ENCODE measurements at regions of chr7 and their contacts with region 1.

Region 1: DNA sequence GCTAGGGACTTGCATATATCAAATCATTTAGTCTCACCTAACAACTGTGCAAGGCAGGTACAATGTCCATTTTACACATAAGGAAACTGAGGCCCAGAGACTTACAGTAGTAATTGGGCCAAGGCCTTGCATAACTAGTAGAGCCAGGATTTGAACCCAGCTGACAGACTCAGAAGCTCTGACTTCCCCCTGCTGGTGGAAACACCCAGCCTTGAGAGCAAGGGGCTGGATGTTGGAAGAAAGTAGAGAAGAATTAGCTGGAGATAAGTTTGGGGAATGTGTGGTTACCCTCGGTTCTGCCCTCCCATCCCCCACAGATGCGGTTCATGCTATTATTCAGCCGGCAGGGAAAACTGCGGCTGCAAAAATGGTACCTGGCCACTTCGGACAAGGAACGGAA is 2.0 kb downstream of the AP1S1 start:
- DNase-seq: no peak
- ATAC-seq: no peak
- H3K4me3 ChIP-seq: no peak overlapping the region
- H3K27ac ChIP-seq: peak overlapping the region; percentile 78
- H3K4me1 ChIP-seq: peaks cover 47% of the 10 kb centered on the region
- H3K27me3 ChIP-seq: no peaks in the 10 kb centered on the region
- CTCF ChIP-seq: 0 out of 2 replicates have a peak, but pooled peaks have one; percentile 16

Region 2: DNA sequence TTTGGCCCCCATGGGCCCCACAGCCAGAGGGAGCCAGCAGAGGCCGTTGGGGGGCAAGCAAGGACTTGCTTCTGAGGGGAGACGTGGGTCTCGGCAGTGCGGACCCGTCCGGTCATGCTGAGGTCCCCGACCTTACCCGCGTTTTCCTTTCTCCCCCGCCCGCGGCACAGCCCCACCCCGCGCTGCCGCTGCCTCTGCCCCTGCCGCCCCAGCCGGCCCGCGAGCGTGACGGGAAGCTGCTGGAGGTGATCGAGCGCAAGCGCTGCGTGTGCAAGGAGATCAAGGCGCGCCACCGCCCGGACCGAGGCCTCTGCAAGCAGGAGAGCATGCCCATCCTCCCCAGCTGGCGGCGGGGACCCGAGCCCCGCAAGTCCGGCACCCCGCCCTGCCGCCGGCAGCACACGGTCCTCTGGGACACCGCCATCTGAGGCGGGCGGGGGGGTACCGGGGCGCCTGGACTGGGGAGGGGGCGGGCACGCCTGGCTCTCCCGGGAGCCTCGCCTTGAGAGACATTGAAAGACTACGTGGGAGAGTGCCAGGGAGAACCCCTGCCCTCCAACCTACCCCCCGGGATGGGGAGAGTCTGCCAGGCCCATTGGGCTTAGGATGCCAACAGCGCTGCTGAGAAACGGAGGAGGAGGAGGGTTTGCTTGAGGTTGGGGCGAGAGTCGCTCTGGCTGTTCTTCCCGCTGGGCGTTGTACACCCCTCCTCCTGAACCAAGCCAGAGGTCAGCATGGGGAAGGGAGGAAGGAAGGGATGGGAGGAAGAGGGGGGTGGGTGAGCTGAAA is 662.6 kb before region 1 on chr7:
- CTCF ChIA-PET with region 1: no interaction called
- POLR2A ChIA-PET with region 1: no interaction called
- intact Hi-C with region 1: no loop called
- DNase-seq: no peak
- ATAC-seq: peak; percentile 64
- H3K4me3 ChIP-seq: peak overlapping the region; percentile 21; the same call in 1 of the 2 replicates
- H3K27ac ChIP-seq: no peak overlapping the region
- H3K4me1 ChIP-seq: no peaks in the 10 kb centered on the region
- H3K27me3 ChIP-seq: no peaks in the 10 kb centered on the region
- CTCF ChIP-seq: no peak

Region 3: GRCh38 chr7:101099969-101100781 is 56.1 kb before region 1 on chr7:
- CTCF ChIA-PET with region 1: interaction called, 11 read pairs
- POLR2A ChIA-PET with region 1: no interaction called
- intact Hi-C with region 1: no loop called
- DNase-seq: peak; percentile 99
- ATAC-seq: peak; percentile 95
- H3K4me3 ChIP-seq: peak overlapping the region; percentile 9; the same call in 1 of the 2 replicates
- H3K27ac ChIP-seq: peak overlapping the region; percentile 81
- H3K4me1 ChIP-seq: peaks cover 27% of the 10 kb centered on the region
- H3K27me3 ChIP-seq: no peaks in the 10 kb centered on the region
- CTCF ChIP-seq: no peak

Region 4: GRCh38 chr7:101342892-101343291 is 186.6 kb after region 1 on chr7:
- CTCF ChIA-PET with region 1: no interaction called
- POLR2A ChIA-PET with region 1: no interaction called
- intact Hi-C with region 1: no loop called
- DNase-seq: no peak
- ATAC-seq: no peak
- H3K4me3 ChIP-seq: no peak overlapping the region
- H3K27ac ChIP-seq: no peak overlapping the region
- H3K4me1 ChIP-seq: no peaks in the 10 kb centered on the region
- H3K27me3 ChIP-seq: no peaks in the 10 kb centered on the region
- CTCF ChIP-seq: no peak

Measured in PC-3 (cell line).